Activated CD8-positive, alpha-beta T cell treated with anti-CD3 and anti-CD28 coated beads, Interleukin-2, amount 10 ng/mL, durations not matched to agents 7 days and 5 days (primary cell): ENCODE measurements at regions of chr6 and their contacts with region 1.

Region 1: GRCh38 chr6:149431905-149432775 is 32.1 kb downstream of the SUMO4 start:
- DNase-seq: peak; percentile 94
- ATAC-seq: peak; percentile 95
- H3K4me3 Mint-ChIP-seq: peak overlapping the region; percentile 61
- H3K27ac Mint-ChIP-seq: peak overlapping the region; percentile 82
- H3K4me1 Mint-ChIP-seq: peaks cover 13% of the 10 kb centered on the region
- H3K27me3 Mint-ChIP-seq: no peaks in the 10 kb centered on the region

Region 2: DNA sequence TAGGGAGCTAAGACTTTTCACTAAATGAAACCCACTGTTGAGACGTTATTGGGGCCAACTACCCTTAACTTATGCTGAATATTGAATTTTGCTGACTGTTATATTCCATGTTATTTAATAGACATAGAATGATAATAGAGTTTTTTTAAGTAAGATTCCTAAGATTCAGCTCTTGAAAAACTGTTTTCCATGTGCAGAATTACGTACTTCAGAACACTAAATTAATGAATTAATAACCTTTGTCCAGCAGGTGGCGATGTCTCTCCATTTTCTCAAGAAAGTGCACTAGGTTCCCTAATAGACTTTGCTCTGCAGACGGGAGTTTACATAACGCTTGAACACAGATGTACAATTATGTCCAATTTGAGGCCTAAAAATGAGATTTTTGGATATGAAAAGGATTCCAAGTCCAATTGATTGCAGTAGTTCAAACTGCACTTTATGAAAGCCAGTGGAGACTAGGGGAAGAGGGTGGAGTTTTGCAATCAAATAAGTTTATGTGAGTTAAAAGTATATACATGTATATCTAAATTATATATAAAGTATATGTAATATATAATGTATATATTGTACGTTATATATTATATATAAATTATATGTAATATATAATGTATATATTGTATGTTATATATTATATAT is 403.3 kb before region 1 on chr6:
- CTCF ChIA-PET with region 1: interaction called, 239 read pairs
- POLR2A ChIA-PET with region 1: interaction called, 5 read pairs
- DNase-seq: peak; percentile 87
- ATAC-seq: peak; percentile 62
- H3K4me3 Mint-ChIP-seq: no peak overlapping the region
- H3K27ac Mint-ChIP-seq: no peak overlapping the region
- H3K4me1 Mint-ChIP-seq: peaks cover 53% of the 10 kb centered on the region
- H3K27me3 Mint-ChIP-seq: no peaks in the 10 kb centered on the region

Region 3: GRCh38 chr6:149075616-149076364 is 356.4 kb before region 1 on chr6:
- CTCF ChIA-PET with region 1: interaction called, 28 read pairs
- POLR2A ChIA-PET with region 1: no interaction called
- DNase-seq: no peak
- ATAC-seq: no peak
- H3K4me3 Mint-ChIP-seq: no peak overlapping the region
- H3K27ac Mint-ChIP-seq: no peak overlapping the region
- H3K4me1 Mint-ChIP-seq: peaks cover 31% of the 10 kb centered on the region
- H3K27me3 Mint-ChIP-seq: no peaks in the 10 kb centered on the region

Region 4: GRCh38 chr6:149094156-149094555 is 338.0 kb before region 1 on chr6:
- CTCF ChIA-PET with region 1: interaction called, 25 read pairs
- POLR2A ChIA-PET with region 1: no interaction called
- DNase-seq: no peak
- ATAC-seq: no peak
- H3K4me3 Mint-ChIP-seq: peak overlapping the region; percentile 54
- H3K27ac Mint-ChIP-seq: peak overlapping the region; percentile 89
- H3K4me1 Mint-ChIP-seq: peaks cover 79% of the 10 kb centered on the region
- H3K27me3 Mint-ChIP-seq: no peaks in the 10 kb centered on the region

Region 5: DNA sequence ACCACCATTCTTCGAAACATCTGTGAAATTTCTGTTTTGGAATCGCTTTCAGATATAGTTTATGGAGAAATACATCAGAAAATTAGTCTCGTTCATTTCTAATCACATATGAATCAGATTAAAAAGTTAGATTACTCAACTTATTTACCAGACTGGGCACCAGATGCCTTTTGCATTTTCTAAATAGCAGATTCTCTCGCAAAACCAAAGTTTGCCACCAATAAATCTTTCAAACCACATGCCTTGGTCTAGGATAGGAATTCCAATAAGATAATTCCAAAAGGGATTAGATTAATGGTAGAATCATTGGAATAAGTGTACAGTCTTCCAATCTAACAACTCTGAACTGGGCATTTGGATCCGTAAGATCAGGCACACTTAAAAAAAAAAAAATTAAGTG is 275.0 kb before region 1 on chr6:
- CTCF ChIA-PET with region 1: no interaction called
- POLR2A ChIA-PET with region 1: no interaction called
- DNase-seq: no peak
- ATAC-seq: no peak
- H3K4me3 Mint-ChIP-seq: no peak overlapping the region
- H3K27ac Mint-ChIP-seq: no peak overlapping the region
- H3K4me1 Mint-ChIP-seq: peaks cover 34% of the 10 kb centered on the region
- H3K27me3 Mint-ChIP-seq: no peaks in the 10 kb centered on the region

Region 6: GRCh38 chr6:149397384-149397783 is 34.8 kb before region 1 on chr6:
- CTCF ChIA-PET with region 1: interaction called, 12 read pairs
- POLR2A ChIA-PET with region 1: no interaction called
- DNase-seq: no peak
- ATAC-seq: no peak
- H3K4me3 Mint-ChIP-seq: no peak overlapping the region
- H3K27ac Mint-ChIP-seq: no peak overlapping the region
- H3K4me1 Mint-ChIP-seq: peaks cover 34% of the 10 kb centered on the region
- H3K27me3 Mint-ChIP-seq: no peaks in the 10 kb centered on the region

Region 7: GRCh38 chr6:149508485-149508884 is 76.3 kb after region 1 on chr6:
- CTCF ChIA-PET with region 1: interaction called, 12 read pairs
- POLR2A ChIA-PET with region 1: no interaction called
- DNase-seq: no peak
- ATAC-seq: peak; percentile 70
- H3K4me3 Mint-ChIP-seq: peak overlapping the region; percentile 28
- H3K27ac Mint-ChIP-seq: peak overlapping the region; percentile 72
- H3K4me1 Mint-ChIP-seq: peaks cover 16% of the 10 kb centered on the region
- H3K27me3 Mint-ChIP-seq: no peaks in the 10 kb centered on the region